Activated CD4-positive, alpha-beta T cell treated with anti-CD3 and anti-CD28 coated beads, Interleukin-2, amount 10 ng/mL, durations not matched to agents 24 days and 14 days (primary cell): ENCODE measurements at regions of chr3 and their contacts with region 1.

Region 1: GRCh38 chr3:119559441-119559963 is at the start of gene CD80:
- DNase-seq: peak; percentile 92
- H3K4me3 Mint-ChIP-seq: peak within 1 kb of the TSS; percentile 80
- H3K27ac Mint-ChIP-seq: peak within 1 kb of the TSS; percentile 77
- H3K4me1 Mint-ChIP-seq: peaks cover 53% of the 10 kb centered on the region
- H3K27me3 Mint-ChIP-seq: no peaks in the 10 kb centered on the region
- total RNA-seq, gene CD80: 12.5 and 13.0 TPM in 2 replicates

Region 2: GRCh38 chr3:119279101-119279554 is 280.4 kb before region 1 on chr3:
- intact Hi-C with region 1: loop called (anchors 5 kb)
- DNase-seq: no peak
- H3K4me3 Mint-ChIP-seq: no peak overlapping the region
- H3K27ac Mint-ChIP-seq: no peak overlapping the region
- H3K4me1 Mint-ChIP-seq: peaks cover 7% of the 10 kb centered on the region
- H3K27me3 Mint-ChIP-seq: peaks cover 5% of the 10 kb centered on the region

Region 3: DNA sequence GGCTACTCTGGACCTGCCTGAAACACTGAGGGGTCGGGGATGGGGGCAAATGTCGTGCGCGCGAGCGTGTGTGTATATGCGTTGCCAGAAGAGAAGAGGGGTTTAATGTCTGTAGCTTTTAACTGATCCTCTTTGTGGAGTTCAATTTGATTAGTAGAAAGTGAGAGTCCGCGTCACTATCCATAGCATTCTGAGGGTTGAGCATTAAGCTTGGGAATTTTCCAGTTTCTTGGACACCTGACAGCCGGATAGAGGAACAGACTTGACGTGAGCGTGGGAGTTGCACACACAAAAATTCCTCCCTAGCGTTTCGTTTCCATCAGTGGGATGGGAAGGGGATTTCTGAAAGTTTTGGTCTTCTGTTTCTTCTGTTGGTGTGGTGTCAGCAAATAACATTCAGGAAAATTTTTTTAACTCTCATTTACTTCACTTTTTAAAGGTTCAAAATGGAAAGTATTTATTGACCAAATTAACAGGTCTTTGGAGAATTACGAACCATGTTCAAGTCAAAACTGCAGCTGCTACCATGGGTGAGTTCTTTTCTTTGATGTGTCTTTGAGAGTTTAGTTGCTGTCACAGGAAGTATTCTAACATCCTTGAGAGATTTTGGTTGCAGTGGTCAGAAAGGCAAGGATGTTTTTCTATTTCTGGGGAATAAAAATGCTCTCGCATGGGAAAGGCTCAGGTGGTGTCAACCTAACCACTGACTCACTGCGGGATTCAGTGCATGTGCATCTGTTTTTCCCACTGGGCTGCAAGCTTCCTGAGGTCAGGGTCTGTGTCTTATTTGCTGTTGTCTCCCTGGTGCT is 89.9 kb before region 1 on chr3:
- intact Hi-C with region 1: loop called (anchors 1 kb)
- DNase-seq: peak; percentile 60
- H3K4me3 Mint-ChIP-seq: peak overlapping the region; percentile 97
- H3K27ac Mint-ChIP-seq: peak overlapping the region; percentile 95
- H3K4me1 Mint-ChIP-seq: peaks cover 30% of the 10 kb centered on the region
- H3K27me3 Mint-ChIP-seq: no peaks in the 10 kb centered on the region

Region 4: GRCh38 chr3:119508172-119508845 is 51.2 kb before region 1 on chr3:
- intact Hi-C with region 1: loop called (anchors 2 kb)
- DNase-seq: peak; percentile 79
- H3K4me3 Mint-ChIP-seq: peak overlapping the region; percentile 41
- H3K27ac Mint-ChIP-seq: peak overlapping the region; percentile 90
- H3K4me1 Mint-ChIP-seq: peaks cover 40% of the 10 kb centered on the region
- H3K27me3 Mint-ChIP-seq: no peaks in the 10 kb centered on the region